ENCODE measurements at regions of chr17 and their contacts with region 1.

Region 1: DNA sequence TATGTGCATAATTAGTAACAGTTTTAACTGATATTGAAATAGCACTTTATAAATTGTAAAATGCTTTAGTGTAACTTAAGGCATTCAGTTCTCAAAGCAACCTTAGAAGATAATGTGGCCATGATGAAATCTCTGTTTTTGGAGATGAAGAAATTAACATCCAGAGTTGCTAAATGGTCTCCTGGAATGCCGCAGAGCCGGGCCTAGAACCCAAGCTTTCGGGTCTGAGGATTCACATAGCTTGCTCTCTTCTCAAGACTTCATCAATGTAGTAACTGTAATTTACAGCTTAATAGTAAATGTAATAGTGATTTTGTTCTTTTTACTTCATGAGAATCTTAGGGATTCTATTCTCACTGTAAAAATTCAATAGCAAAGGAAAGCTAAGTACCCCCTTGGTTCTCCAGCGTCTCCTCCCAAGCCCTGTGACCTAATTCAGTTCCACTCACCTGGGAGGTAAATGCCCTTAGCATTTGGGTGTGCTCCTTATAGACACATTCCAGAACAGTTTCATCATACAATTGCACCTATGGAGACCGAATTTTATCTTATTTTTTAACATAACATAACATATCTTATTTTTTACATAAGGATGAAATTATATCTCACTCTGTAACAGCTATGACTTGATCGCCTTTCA is 272.2 kb downstream of the HS3ST3A1 start:
- DNase-seq: no peak
- ATAC-seq: no peak
- H3K4me3 ChIP-seq: no peak overlapping the region
- H3K27ac ChIP-seq: no peak overlapping the region
- H3K4me1 ChIP-seq: no peaks in the 10 kb centered on the region
- H3K27me3 ChIP-seq: peaks cover 0 to 4% (median 0%) of the 10 kb centered on the region in 7 donors
- CTCF ChIP-seq: no peak

Region 2: DNA sequence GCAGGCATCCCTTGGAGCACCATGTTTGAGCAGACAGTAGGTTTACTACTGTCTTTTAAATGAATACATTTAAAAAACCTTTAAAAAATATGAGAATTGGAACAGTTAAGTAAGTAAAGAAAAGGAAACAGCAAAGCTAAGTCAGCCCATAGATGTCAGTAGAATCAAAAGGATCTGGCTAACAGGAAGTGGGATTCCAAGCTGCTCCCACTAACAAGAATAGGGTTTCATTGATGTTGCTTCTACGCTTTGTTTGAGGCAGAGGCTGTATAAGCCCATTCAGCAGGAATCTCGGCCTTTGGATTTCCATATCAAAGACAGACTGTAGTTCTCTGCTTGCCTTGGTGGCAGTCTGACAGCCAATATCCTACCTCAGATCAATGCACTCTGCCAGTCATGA is 188.8 kb before region 1 on chr17:
- intact Hi-C with region 1: no loop called
- DNase-seq: no peak
- ATAC-seq: no peak
- H3K4me3 ChIP-seq: no peak overlapping the region
- H3K27ac ChIP-seq: no peak overlapping the region
- H3K4me1 ChIP-seq: no peaks in the 10 kb centered on the region
- H3K27me3 ChIP-seq: peaks cover 0 to 4% (median 0%) of the 10 kb centered on the region in 7 donors
- CTCF ChIP-seq: no peak

Region 3: DNA sequence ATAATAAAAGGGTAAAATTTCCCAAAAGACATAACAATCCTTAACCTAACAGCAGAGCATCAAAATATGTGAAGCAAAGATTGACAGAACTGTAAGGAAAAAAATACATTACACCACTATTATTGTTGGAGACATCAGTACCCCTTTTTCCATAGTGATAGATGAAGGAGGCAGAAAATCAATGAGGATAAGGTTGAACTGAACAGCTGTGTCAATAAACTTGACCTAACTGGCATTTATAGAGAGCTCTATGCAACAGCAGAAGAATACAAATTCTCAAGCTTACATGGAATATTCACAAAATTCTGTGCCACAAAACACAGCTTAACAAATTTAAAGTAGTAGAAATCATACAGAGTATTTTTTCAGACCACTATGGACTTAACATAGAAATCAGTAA is 116.7 kb before region 1 on chr17:
- intact Hi-C with region 1: no loop called
- DNase-seq: no peak
- ATAC-seq: no peak
- H3K4me3 ChIP-seq: no peak overlapping the region
- H3K27ac ChIP-seq: no peak overlapping the region
- H3K4me1 ChIP-seq: no peaks in the 10 kb centered on the region
- H3K27me3 ChIP-seq: no peaks in the 10 kb centered on the region
- CTCF ChIP-seq: no peak

Region 4: DNA sequence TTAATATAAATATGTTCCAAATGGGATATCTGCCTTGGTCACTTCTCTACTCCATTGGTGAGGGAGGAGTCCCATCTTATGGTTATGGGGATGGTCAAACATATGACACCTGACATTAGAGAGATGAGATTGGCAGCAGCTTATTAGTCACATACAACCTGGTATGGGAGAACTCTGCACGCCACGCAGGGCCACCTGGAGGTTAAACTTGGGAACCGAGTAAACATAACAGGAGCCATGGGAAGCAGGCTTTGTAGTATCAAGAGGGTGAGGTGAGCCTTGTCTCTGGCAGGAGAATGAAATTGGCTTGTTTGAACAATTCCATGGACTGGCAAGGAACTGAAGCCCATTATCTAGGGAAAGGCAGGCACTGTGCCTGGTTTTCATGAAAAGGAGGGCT is 73.0 kb before region 1 on chr17:
- intact Hi-C with region 1: no loop called
- DNase-seq: no peak
- ATAC-seq: no peak
- H3K4me3 ChIP-seq: no peak overlapping the region
- H3K27ac ChIP-seq: no peak overlapping the region
- H3K4me1 ChIP-seq: no peaks in the 10 kb centered on the region
- H3K27me3 ChIP-seq: no peaks in the 10 kb centered on the region
- CTCF ChIP-seq: no peak

Region 5: DNA sequence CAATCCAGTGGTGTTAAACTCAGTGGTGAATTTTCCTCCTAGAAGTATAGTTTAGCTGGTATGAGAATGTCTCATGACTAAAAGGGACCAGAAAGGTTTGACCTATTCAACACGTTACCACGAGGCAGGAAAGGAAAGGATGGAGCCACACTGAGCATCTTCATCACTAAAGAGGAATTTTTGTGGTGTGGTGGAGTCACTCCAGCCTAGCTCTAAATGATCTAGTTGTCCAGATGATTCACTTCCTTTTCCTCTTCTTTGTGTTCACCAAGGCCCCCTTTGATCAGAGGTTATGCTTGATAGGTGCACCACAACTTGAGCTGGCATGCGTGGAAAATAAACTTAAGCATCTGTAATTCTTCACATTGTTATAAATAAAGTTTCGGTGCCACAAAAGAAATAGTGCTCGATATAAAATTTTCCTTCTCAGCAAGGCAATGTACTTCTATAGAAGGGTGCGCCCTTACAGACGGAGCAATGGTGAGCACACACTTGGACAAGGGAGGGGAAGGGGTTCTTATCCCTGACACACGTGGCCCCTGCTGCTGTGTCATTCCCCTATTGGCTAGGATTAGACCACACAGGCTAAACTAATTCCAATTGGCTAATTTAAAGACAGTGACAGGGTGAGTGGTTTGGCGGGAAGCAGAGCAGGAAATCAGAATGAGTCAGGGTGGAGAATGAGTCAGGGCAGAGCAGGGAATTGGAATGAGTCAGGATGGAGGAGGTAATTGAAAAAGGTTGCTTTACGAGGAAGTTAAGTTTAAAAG is 17.6 kb after region 1 on chr17:
- intact Hi-C with region 1: no loop called
- DNase-seq: no peak
- ATAC-seq: peak in 1 of 8 donors; percentile 64
- H3K4me3 ChIP-seq: no peak overlapping the region
- H3K27ac ChIP-seq: peak overlapping the region in 1 of 10 donors; percentile 73
- H3K4me1 ChIP-seq: peaks cover 0 to 9% (median 0%) of the 10 kb centered on the region in 9 donors
- H3K27me3 ChIP-seq: no peaks in the 10 kb centered on the region
- CTCF ChIP-seq: no peak

Region 6: DNA sequence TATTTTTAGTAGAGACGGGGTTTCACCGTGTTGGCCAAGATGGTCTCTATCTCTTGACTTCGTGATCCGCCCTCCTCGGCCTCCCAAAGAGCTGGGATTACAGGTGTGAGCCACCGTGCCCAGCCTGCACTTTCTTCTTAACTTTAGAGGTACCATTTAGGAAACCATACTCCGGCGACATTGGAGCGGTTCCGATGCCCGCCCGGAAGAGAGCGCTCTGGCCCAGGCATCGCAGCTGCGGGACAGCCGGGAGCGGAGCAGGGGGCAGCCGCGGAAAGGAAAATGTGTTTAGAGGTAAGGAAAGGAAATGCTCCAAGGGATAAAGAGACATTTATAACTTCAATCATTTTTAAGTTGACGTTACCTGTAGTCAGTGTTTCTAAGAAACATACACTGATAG is 965.3 kb after region 1 on chr17:
- intact Hi-C with region 1: loop called in 3 of 10 experiments (anchors 5 to 10 kb)
- DNase-seq: no peak
- ATAC-seq: no peak
- H3K4me3 ChIP-seq: no peak overlapping the region
- H3K27ac ChIP-seq: no peak overlapping the region
- H3K4me1 ChIP-seq: peaks cover 4 to 35% (median 32%) of the 10 kb centered on the region in 9 donors
- H3K27me3 ChIP-seq: peaks cover 10 to 98% (median 90%) of the 10 kb centered on the region in 7 donors
- CTCF ChIP-seq: peak in 1 of 9 donors; percentile 20

Measured in heart right ventricle (tissue), 16 donors.